Activated CD8-positive, alpha-beta T cell treated with anti-CD3 and anti-CD28 coated beads for 36 hours (primary cell): ENCODE measurements at regions of chr3 and their contacts with region 1.

Region 1: GRCh38 chr3:141544697-141545096 is 57.9 kb downstream of the RASA2 start:
- DNase-seq: no peak
- ATAC-seq: peak; percentile 52
- H3K4me3 Mint-ChIP-seq: peak overlapping the region; percentile 18
- H3K27ac Mint-ChIP-seq: peak overlapping the region; percentile 87
- H3K4me1 Mint-ChIP-seq: peaks cover 83% of the 10 kb centered on the region
- H3K27me3 Mint-ChIP-seq: no peaks in the 10 kb centered on the region
- CTCF ChIP-seq: no peak

Region 2: DNA sequence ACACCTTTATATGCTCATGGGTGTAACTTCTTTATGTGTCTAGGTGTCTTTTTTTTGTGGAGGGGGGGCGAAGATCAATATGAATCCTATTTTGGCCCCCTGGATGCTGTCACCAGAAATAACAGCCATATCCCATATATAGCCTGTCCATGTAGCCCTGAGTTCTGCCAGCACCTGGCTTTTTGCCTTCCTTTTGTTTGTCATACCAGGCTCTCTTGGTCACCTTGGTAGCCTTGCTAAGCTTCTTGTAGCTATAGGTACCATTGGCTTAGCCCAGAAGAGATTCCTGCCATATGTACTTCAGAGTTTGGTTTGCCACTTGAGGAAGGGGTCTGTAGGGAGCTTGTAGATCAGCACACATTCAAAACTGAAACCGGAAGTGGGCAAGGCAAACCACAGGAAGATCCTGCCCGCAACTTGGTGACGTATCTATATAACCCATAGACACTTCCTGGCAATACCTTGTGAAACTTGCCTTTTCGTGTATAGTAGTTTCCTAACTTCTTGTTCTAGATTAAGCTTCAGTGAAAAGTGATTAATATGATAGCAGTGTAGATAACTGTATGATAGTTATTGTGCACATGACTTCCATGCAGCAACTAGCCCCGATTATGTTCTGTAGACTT is 46.0 kb before region 1 on chr3:
- CTCF ChIA-PET with region 1: interaction called, 7 read pairs
- POLR2A ChIA-PET with region 1: interaction called, 10 read pairs
- intact Hi-C with region 1: no loop called
- DNase-seq: peak; percentile 95
- ATAC-seq: peak; percentile 83
- H3K4me3 Mint-ChIP-seq: peak overlapping the region; percentile 63
- H3K27ac Mint-ChIP-seq: peak overlapping the region; percentile 97
- H3K4me1 Mint-ChIP-seq: peaks cover 67% of the 10 kb centered on the region
- H3K27me3 Mint-ChIP-seq: no peaks in the 10 kb centered on the region
- CTCF ChIP-seq: no peak